Left cardiac atrium (tissue), 4 donors: ENCODE measurements at regions of chr5 and their contacts with region 1.

Region 1: GRCh38 chr5:78300464-78301045 is 6.1 kb upstream of the AP3B1 start:
- DNase-seq: no peak
- ATAC-seq: no peak

Region 2: DNA sequence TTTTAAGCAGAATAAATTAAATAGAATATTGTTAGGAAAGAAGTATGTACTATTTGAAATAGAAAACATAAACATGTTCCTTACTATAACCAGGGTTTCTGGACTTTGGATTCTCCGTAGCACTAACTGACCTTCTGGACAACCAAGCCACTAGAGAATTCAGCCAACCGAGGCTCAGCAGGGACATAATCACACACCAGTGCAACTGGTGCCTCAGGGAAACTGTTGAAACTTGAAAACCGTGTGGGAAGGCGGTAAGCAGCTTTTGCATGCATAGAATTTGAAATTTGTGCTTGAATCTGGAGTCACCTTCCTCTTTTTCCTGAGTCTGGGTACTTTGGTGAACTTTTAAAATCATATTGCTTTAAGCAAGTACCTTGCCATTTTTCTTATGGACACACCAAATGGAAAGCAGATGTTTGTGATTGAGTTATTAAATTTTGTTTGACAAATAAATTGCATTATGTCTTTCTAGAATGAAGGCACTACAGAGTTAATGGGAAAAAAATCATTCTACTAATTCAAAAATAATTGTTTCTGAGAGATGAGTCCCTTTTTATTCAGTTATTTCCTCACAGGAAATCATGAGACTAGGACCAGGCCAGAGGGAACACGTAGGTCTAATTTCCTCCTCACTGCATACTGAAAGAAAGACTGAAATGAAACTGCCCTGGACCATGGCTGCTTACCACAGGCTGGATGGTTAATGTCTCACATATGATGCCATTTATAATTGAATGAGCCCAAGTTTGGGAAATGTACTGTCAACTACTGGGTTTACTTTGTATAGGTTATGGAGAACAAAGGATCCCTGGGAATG is 39.3 kb after region 1 on chr5:
- intact Hi-C with region 1: loop called in 1 of 2 experiments (anchors 5 kb)
- DNase-seq: no peak
- ATAC-seq: no peak